ENCODE measurements at regions of chr5 and their contacts with region 1.

Region 1: DNA sequence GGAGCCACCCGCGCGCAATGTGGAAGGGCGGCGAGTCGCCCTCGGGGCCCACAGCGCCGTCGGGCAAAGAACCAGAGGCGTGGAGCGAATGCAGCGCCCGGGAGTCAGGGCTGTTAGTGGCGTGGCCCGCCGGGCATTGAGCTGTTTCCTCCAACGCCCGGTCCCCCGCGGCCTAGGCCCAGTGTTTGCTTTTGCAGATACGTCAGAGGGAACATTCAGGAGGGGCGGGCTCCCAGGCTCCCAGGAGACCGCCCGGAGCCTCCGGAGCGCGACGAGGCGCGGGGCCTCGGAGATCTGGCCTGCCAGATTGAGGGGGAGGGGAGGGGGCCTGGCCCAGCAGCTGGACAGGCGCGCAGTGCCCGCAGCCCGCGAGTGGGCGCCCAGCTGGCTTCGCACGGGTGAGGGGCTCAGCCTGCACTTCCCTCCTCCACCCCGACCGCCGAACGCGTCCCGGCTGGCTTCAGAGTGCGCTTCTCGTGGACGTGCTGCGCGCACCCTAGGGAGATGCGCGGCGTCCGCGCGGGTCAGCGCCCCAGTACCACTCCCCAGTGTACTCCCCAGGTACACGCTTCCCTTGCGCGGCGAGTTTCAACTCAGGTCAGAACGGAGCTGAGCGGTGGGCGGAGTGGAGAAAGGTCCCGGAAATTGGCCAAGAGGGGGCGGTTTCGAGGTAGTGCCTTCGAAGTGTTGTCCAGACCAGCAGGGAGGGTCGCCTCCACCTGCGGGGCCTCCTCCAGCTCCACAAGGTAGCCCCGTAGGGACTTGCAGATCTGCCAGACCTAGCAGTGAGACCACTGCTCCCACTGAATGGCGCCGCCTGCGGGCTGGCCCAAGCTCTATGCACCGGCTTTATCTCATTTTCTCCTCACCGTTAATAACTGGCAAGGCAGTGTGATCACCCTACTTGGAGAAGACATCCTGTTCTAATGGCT is 130.4 kb downstream of the TMEM174 start:
- DNase-seq: no peak
- H3K4me3 ChIP-seq: no peak overlapping the region
- CTCF ChIP-seq: no peak
- POLR2A ChIP-seq: no peak

Region 2: DNA sequence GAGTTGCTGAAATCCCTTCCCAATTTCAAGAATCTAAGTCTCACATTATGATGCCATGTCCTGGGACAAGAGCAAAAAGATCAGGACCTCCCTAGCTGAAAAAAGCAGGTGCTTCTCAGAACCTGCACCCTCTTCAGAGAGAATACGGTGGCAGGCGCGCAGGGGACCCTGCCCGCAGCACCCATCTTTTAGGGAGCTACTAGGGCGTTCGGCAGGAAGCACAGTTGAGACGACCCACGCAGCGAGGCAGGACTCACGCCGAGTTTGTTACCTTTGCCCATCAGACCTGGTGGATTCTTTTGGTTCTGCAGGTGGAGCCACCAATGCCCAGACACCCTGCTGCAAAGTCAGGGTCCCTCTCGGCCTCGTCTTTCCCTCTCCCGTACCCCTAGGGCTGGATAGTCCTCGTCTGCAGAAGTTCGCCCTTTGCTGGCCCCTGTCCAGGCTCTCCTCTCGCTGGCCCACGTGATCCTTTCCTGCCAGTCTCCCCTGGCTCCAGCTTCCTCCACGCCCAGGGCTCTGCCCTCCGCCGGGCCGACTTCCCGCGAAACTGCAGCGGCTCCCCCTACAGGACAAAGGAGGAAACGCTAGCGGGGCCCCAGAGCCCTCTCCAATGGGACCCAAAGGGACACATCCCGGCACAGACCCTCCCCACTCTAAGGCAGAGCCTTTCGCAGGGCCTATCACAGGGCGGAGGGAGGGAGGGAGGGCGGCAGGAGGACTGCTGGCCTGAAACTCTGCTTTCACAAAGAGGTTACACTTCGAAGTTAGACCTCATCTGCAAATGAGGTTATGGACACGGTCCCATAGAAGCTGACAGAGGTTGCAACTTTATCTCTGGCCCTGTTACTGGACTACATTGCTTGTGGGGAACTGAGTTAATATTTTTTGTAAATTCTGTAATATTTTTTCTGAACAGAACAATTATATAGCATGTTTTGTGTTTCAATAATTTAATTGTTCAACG is 101.6 kb before region 1 on chr5:
- intact Hi-C with region 1: loop called (anchors 10 kb)
- DNase-seq: peak; percentile 40 to 89
- H3K4me3 ChIP-seq: no peak overlapping the region
- CTCF ChIP-seq: no peak
- POLR2A ChIP-seq: no peak

Measured in lower leg skin (tissue), 4 donors.